IMR-90 (cell line): ENCODE measurements at regions of chr6 and their contacts with region 1.

Region 1: DNA sequence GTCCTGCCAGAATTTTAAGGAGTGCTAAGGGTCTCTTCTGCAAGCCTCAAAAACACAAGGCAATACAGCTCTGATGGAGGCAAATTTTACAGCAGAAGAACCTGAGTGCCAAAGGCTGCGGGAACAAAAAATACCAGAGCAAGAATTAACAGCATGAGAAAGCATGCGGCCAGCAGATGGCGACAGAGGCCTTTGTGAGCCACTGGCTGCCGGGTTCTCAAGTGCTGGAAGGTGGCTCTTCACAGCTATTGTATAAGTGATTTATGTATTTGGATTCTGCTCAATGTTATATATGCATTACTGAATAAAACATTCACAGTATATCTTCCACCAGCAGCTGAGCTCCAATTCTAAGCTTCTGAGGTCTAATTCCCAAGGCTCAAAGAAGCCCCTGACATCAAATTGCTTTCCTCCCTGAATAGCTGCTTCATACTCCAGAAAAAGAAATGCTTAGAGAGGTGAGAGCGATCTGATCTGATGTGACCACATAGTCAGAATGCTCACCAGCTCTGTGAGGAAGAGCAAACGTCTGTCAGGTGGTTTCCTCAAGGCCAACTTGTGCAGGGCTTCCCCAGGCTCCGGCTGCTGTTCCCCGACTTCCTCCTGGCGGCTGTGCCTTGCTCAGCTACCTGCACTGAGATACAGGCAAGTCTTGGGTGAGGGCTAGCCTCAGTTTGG is 58.6 kb downstream of the PPP1R3G start:
- DNase-seq: peak; percentile 77
- ATAC-seq: peak; percentile 94
- H3K4me3 ChIP-seq: no peak overlapping the region
- H3K27ac ChIP-seq: no peak overlapping the region
- H3K4me1 ChIP-seq: no peaks in the 10 kb centered on the region; the same call in 1 of the 2 replicates
- H3K27me3 ChIP-seq: no peaks in the 10 kb centered on the region
- CTCF ChIP-seq: peak; percentile 98
- POLR2A ChIP-seq: no peak
- RAD21 ChIP-seq: peak; percentile 99

Region 2: GRCh38 chr6:5159148-5159547 is 15.4 kb after region 1 on chr6:
- CTCF ChIA-PET with region 1: interaction called, 10 read pairs
- POLR2A ChIA-PET with region 1: no interaction called
- dilution Hi-C with region 1: no loop called
- in situ Hi-C with region 1: no loop called
- intact Hi-C with region 1: no loop called
- DNase-seq: no peak
- ATAC-seq: no peak
- H3K4me3 ChIP-seq: no peak overlapping the region
- H3K27ac ChIP-seq: no peak overlapping the region
- H3K4me1 ChIP-seq: no peaks in the 10 kb centered on the region; the same call in 1 of the 2 replicates
- H3K27me3 ChIP-seq: no peaks in the 10 kb centered on the region
- CTCF ChIP-seq: no peak
- POLR2A ChIP-seq: no peak
- RAD21 ChIP-seq: no peak

Region 3: DNA sequence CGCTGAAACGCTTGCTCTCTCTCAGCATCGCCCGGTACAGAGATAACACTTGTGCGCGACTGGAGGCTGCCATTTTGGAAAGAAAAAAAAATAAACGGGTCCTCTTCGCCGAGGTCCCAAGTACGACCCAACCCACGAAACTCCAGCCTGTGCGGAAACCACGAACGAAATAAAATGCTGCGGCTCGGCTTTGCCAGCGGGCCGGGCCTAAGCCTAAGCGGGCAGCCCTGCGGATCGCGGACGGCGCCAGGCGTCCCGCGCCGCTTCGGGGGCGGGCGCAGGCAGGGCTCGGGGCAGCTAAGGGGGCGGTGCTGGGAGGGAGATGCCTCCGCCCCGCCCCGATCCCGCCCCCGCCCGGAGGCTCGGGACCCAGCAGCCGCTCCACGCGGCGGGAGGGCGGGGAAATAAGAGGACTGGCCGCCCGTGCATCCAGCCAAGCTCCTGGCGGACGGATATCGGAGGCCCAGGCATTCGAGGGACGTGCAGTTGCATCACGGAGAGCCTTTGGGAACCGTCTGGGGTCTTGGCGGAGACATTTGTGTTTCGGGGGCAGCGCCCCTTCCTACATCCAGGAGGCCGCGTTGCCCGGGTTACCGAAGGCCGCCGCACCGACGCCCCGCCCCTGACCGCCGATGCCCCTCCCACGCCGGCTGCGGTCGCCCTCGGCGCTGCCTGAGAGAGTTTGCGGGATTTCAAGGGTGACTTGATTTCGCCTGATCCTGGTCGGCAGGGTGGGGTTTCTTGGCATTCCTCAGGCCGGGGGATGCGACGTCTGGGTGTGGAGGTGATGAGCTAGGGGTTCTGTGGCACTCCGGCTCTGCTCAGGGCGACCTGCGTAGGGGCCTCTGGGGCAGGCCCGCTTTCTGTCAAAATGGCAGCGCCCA is 117.1 kb after region 1 on chr6 and contains the starts of genes FARS2 and LYRM4:
- CTCF ChIA-PET with region 1: no interaction called
- POLR2A ChIA-PET with region 1: no interaction called
- dilution Hi-C with region 1: no loop called
- in situ Hi-C with region 1: no loop called
- intact Hi-C with region 1: loop called (anchors 2 kb)
- DNase-seq: peak; percentile 73
- ATAC-seq: peak; percentile 95
- H3K4me3 ChIP-seq: peak within 1 kb of the TSS; percentile 89
- H3K27ac ChIP-seq: peak within 1 kb of the TSS; percentile 99
- H3K4me1 ChIP-seq: no peaks in the 10 kb centered on the region
- H3K27me3 ChIP-seq: no peaks in the 10 kb centered on the region
- CTCF ChIP-seq: 0 out of 2 replicates have a peak, but pooled peaks have one; percentile 13
- POLR2A ChIP-seq: peak; percentile 45; the same call in 1 of the 2 replicates
- RAD21 ChIP-seq: no peak
- total RNA-seq, gene FARS2: 26.1 and 28.9 TPM in 2 replicates
- total RNA-seq, gene LYRM4: 11.5 and 16.1 TPM in 2 replicates

Region 4: DNA sequence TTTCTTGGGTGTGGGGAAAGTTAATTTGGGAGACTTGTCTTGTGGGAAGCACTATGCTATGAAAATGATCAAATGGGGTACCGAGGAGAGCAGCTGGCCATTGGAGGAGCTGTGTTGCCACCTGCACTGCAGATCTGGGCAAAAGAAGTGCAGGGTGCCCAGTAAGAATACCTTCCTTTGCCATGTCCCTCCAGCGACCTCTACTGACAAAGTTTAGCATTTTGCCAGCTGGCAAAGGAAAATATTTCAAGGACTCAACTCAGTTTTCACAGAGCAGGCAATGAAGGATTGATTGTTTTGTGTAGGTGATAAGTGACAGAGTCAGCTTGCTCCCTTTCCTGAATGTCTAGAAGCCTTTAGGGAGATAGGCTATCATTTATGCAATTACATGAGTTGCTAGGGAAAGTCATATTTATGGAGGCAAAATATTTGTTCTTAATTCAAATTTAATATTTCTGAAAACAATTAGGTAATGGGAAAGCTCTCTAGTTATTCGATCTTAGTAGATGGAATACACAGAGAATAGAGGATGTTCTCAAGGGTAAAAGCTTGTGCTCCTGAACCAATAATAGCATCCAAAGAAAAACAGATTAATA is 236.0 kb after region 1 on chr6:
- CTCF ChIA-PET with region 1: interaction called, 9 read pairs
- POLR2A ChIA-PET with region 1: no interaction called
- dilution Hi-C with region 1: no loop called
- in situ Hi-C with region 1: no loop called
- intact Hi-C with region 1: loop called (anchors 1 kb)
- DNase-seq: peak; percentile 44
- ATAC-seq: peak; percentile 51
- H3K4me3 ChIP-seq: no peak overlapping the region
- H3K27ac ChIP-seq: no peak overlapping the region
- H3K4me1 ChIP-seq: no peaks in the 10 kb centered on the region; the same call in 1 of the 2 replicates
- H3K27me3 ChIP-seq: no peaks in the 10 kb centered on the region
- CTCF ChIP-seq: peak; percentile 71
- POLR2A ChIP-seq: no peak
- RAD21 ChIP-seq: peak; percentile 73

Region 5: GRCh38 chr6:5398530-5398929 is 254.8 kb after region 1 on chr6:
- CTCF ChIA-PET with region 1: interaction called, 4 read pairs
- POLR2A ChIA-PET with region 1: no interaction called
- dilution Hi-C with region 1: no loop called
- in situ Hi-C with region 1: loop called (anchors 5 kb)
- intact Hi-C with region 1: loop called (anchors 1 kb)
- DNase-seq: peak; percentile 61
- ATAC-seq: peak; percentile 83
- H3K4me3 ChIP-seq: no peak overlapping the region
- H3K27ac ChIP-seq: no peak overlapping the region
- H3K4me1 ChIP-seq: no peaks in the 10 kb centered on the region
- H3K27me3 ChIP-seq: no peaks in the 10 kb centered on the region
- CTCF ChIP-seq: peak; percentile 56
- POLR2A ChIP-seq: no peak
- RAD21 ChIP-seq: peak; percentile 50